ENCODE measurements at regions of chr11 and their contacts with region 1.

Region 1: GRCh38 chr11:93895106-93895862 is 44.9 kb upstream of the VSTM5 start:
- DNase-seq: peak in 1 of 2 experiments; percentile 79
- H3K4me3 ChIP-seq: no peak overlapping the region
- H3K4me3 Mint-ChIP-seq: no peak overlapping the region
- H3K27ac Mint-ChIP-seq: no peak overlapping the region
- H3K4me1 ChIP-seq: no peaks in the 10 kb centered on the region
- H3K4me1 Mint-ChIP-seq: no peaks in the 10 kb centered on the region
- H3K27me3 ChIP-seq: no peaks in the 10 kb centered on the region
- H3K27me3 Mint-ChIP-seq: peaks cover 17% of the 10 kb centered on the region
- CTCF ChIP-seq: peak; percentile 86 to 89

Region 2: DNA sequence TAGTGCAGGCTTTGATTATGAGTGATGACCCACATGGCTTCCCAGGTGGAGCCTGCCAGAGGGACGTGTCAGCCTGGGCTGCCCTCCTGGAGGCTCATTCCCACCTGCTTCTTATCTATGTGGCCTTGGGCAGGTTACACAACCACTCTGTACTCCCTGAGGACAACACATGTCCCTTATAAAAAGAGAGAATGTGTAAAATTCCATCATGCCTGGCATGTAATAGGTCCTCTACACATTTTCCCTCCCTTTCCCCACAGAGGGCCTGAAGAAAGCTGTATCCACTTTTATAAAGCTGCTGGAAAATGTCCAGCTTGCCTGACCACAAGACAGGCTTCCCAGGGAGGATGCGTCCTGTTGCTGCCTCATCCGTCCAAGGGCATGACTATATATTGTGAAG is 10.1 kb after region 1 on chr11:
- CTCF ChIA-PET with region 1: interaction called, 21 read pairs
- POLR2A ChIA-PET with region 1: no interaction called
- intact Hi-C with region 1: no loop called
- DNase-seq: peak; percentile 33 to 71
- H3K4me3 ChIP-seq: no peak overlapping the region
- H3K4me3 Mint-ChIP-seq: no peak overlapping the region
- H3K27ac Mint-ChIP-seq: no peak overlapping the region
- H3K4me1 ChIP-seq: peaks cover 8% of the 10 kb centered on the region
- H3K4me1 Mint-ChIP-seq: peaks cover 7% of the 10 kb centered on the region
- H3K27me3 ChIP-seq: no peaks in the 10 kb centered on the region
- H3K27me3 Mint-ChIP-seq: peaks cover 6% of the 10 kb centered on the region
- CTCF ChIP-seq: no peak

Region 3: GRCh38 chr11:94107363-94107762 is 212.1 kb after region 1 on chr11:
- CTCF ChIA-PET with region 1: interaction called, 7 read pairs
- POLR2A ChIA-PET with region 1: no interaction called
- intact Hi-C with region 1: loop called (anchors 1 kb)
- DNase-seq: no peak
- H3K4me3 ChIP-seq: no peak overlapping the region
- H3K4me3 Mint-ChIP-seq: no peak overlapping the region
- H3K27ac Mint-ChIP-seq: no peak overlapping the region
- H3K4me1 ChIP-seq: no peaks in the 10 kb centered on the region
- H3K4me1 Mint-ChIP-seq: no peaks in the 10 kb centered on the region
- H3K27me3 ChIP-seq: no peaks in the 10 kb centered on the region; the same call in 1 of the 2 replicates
- H3K27me3 Mint-ChIP-seq: no peaks in the 10 kb centered on the region
- CTCF ChIP-seq: peak in 1 of 2 experiments; percentile 24

Region 4: DNA sequence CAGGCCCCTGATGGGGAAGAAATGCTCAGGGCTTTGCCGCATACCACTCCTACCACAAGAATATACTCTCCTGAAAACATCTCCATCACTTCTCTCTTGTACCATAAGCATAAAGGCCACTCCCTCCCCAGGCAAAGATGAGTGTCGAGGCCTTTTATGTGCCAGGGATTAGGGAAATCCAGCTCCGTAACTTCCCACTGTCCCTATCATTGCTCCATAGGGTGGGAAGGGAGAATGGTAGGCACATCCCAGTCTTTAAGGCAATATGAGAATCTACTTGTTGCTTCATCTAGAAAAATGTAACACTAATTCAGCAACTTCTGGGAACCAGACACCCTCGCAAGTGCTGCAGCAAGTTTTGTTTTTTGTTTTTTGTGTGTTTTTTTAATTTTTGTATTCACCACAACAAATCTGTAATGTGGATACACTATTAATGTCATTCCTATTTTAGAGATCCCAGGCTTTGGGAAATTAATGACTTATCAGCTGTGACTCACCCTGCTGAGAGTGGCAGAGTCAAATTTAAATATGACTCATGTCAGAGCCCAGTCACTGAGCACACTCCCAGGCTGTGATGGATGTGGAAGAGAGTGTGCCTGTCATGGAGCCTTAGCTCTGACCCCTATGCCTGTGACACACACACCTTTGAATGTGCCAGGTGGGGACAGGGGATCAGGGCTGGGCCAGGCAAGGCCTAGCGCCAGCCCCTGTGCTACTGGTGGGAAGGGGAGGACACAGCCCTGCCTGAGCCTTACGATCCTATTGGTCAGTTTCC is 256.8 kb after region 1 on chr11:
- CTCF ChIA-PET with region 1: interaction called, 12 read pairs
- POLR2A ChIA-PET with region 1: no interaction called
- intact Hi-C with region 1: no loop called
- DNase-seq: peak; percentile 36 to 62
- H3K4me3 ChIP-seq: no peak overlapping the region
- H3K4me3 Mint-ChIP-seq: peak overlapping the region; percentile 15
- H3K27ac Mint-ChIP-seq: peak overlapping the region; percentile 77
- H3K4me1 ChIP-seq: peaks cover 46% of the 10 kb centered on the region
- H3K4me1 Mint-ChIP-seq: peaks cover 47% of the 10 kb centered on the region
- H3K27me3 ChIP-seq: no peaks in the 10 kb centered on the region
- H3K27me3 Mint-ChIP-seq: no peaks in the 10 kb centered on the region
- CTCF ChIP-seq: no peak

Region 5: DNA sequence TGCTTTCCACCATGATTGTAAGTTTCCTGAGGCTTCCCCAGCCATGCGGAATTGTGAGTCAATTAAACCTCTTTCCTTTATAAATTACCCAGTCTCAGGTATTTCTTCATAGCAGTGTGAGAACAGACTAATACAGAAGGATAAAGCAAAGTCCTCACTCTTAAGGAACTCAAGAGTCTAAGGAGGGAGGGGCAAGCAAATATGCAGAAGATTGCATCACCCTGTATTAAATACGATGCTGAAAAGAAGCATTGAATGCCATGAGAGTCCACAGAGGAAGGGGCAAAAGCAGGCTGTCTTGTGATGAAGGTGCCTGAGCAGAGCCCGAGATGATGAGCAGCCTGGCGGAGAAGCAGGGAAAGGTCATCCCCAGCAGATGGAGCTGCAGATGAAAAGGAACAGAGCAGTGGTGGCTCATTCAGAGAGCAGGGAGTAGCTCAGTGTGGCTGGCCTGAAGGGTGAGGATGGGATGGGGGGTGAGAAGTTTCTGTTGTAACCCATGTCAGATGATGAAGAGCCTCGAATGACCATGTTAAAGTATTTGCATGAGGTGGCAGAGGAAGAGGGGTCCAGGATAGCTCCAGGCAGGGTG is 402.8 kb after region 1 on chr11:
- CTCF ChIA-PET with region 1: interaction called, 10 read pairs
- POLR2A ChIA-PET with region 1: no interaction called
- intact Hi-C with region 1: loop called (anchors 5 kb)
- DNase-seq: peak in 1 of 2 experiments; percentile 42
- H3K4me3 ChIP-seq: no peak overlapping the region
- H3K4me3 Mint-ChIP-seq: no peak overlapping the region
- H3K27ac Mint-ChIP-seq: no peak overlapping the region
- H3K4me1 ChIP-seq: no peaks in the 10 kb centered on the region
- H3K4me1 Mint-ChIP-seq: peaks cover 13% of the 10 kb centered on the region
- H3K27me3 ChIP-seq: no peaks in the 10 kb centered on the region
- H3K27me3 Mint-ChIP-seq: peaks cover 3% of the 10 kb centered on the region
- CTCF ChIP-seq: peak; percentile 11 to 49

Region 6: GRCh38 chr11:94417386-94417987 is 522.2 kb after region 1 on chr11:
- CTCF ChIA-PET with region 1: interaction called, 48 read pairs
- POLR2A ChIA-PET with region 1: no interaction called
- intact Hi-C with region 1: loop called (anchors 1 kb)
- DNase-seq: peak in 1 of 2 experiments; percentile 58
- H3K4me3 ChIP-seq: no peak overlapping the region
- H3K4me3 Mint-ChIP-seq: no peak overlapping the region
- H3K27ac Mint-ChIP-seq: no peak overlapping the region
- H3K4me1 ChIP-seq: no peaks in the 10 kb centered on the region
- H3K4me1 Mint-ChIP-seq: no peaks in the 10 kb centered on the region
- H3K27me3 ChIP-seq: no peaks in the 10 kb centered on the region
- H3K27me3 Mint-ChIP-seq: no peaks in the 10 kb centered on the region
- CTCF ChIP-seq: peak; percentile 74 to 79